Mammary epithelial cell (primary cell): ENCODE measurements at regions of chr3 and their contacts with region 1.

Region 1: DNA sequence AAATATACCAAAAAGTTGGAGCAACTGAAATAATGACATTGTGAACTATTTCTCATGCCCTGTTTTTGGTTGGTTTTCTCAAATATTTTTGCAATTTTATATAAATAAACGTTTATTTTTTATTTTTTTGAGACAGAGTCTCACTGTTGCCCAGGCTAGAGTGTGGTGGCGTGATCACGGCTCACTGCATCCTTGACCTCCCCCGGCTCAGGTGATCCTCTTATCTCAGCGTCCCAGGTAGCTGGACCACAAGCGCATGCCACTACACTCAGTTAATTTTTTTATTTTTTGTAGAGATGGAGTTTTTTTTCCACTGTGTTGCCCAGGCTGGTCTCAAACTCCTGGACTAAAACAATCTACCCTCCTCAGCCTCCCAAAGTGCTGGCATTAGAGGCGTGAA is 45.6 kb downstream of the YEATS2 start:
- DNase-seq: no peak
- H3K4me3 ChIP-seq: no peak overlapping the region
- H3K27ac ChIP-seq: no peak overlapping the region
- H3K4me1 ChIP-seq: no peaks in the 10 kb centered on the region
- H3K27me3 ChIP-seq: no peaks in the 10 kb centered on the region
- CTCF ChIP-seq: no peak

Region 2: GRCh38 chr3:183233966-183234365 is 509.3 kb before region 1 on chr3:
- CTCF ChIA-PET with region 1: no interaction called
- dilution Hi-C with region 1: no loop called
- in situ Hi-C with region 1: no loop called
- intact Hi-C with region 1: no loop called
- DNase-seq: no peak
- H3K4me3 ChIP-seq: no peak overlapping the region
- H3K27ac ChIP-seq: no peak overlapping the region
- H3K4me1 ChIP-seq: no peaks in the 10 kb centered on the region
- H3K27me3 ChIP-seq: no peaks in the 10 kb centered on the region
- CTCF ChIP-seq: no peak

Region 3: GRCh38 chr3:183779896-183780465 is 36.8 kb after region 1 on chr3:
- CTCF ChIA-PET with region 1: no interaction called
- dilution Hi-C with region 1: loop called (anchors 5 kb)
- in situ Hi-C with region 1: no loop called
- intact Hi-C with region 1: no loop called
- DNase-seq: no peak
- H3K4me3 ChIP-seq: no peak overlapping the region
- H3K27ac ChIP-seq: no peak overlapping the region
- H3K4me1 ChIP-seq: no peaks in the 10 kb centered on the region
- H3K27me3 ChIP-seq: no peaks in the 10 kb centered on the region
- CTCF ChIP-seq: no peak

Region 4: GRCh38 chr3:184209146-184209923 is 466.1 kb after region 1 on chr3:
- CTCF ChIA-PET with region 1: no interaction called
- dilution Hi-C with region 1: no loop called
- in situ Hi-C with region 1: no loop called
- intact Hi-C with region 1: no loop called
- DNase-seq: no peak
- H3K4me3 ChIP-seq: no peak overlapping the region
- H3K27ac ChIP-seq: no peak overlapping the region
- H3K4me1 ChIP-seq: no peaks in the 10 kb centered on the region
- H3K27me3 ChIP-seq: no peaks in the 10 kb centered on the region
- CTCF ChIP-seq: no peak